ENCODE measurements at regions of chr20 and their contacts with region 1.

Region 1: GRCh38 chr20:54038961-54039360 is 31.4 kb downstream of the BCAS1 start:
- DNase-seq: no peak
- H3K4me3 Mint-ChIP-seq: no peak overlapping the region
- H3K27ac Mint-ChIP-seq: no peak overlapping the region
- H3K4me1 Mint-ChIP-seq: peaks cover 3% of the 10 kb centered on the region
- H3K27me3 Mint-ChIP-seq: peaks cover 12% of the 10 kb centered on the region

Region 2: DNA sequence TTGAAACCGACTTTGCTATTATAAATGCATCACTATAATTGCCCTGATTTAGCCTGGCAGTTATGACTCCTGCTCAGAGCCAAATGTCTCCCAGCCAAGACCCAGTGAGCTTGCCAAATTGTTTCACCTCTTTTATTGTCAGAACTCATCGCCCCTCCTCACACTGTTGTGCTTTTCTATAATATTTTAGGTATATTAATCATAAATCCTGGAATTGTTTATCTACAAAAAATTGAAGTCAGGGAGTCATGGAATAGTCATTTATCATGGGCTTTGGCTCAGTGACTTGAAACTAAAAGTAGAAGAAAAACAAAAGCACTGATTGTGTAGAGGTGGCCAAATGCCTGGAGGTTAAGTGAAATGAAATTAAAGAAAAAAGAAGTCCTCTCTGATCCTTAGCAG is 254.6 kb after region 1 on chr20:
- intact Hi-C with region 1: loop called (anchors 5 kb)
- DNase-seq: no peak
- H3K4me3 Mint-ChIP-seq: no peak overlapping the region
- H3K27ac Mint-ChIP-seq: no peak overlapping the region
- H3K4me1 Mint-ChIP-seq: peaks cover 12% of the 10 kb centered on the region
- H3K27me3 Mint-ChIP-seq: no peaks in the 10 kb centered on the region

Measured in activated T-helper 1 cell treated with anti-CD3 and anti-CD28 coated beads, Interleukin-12 subunit alpha, Interleukin-12 subunit beta, Interleukin-2, Interleukin-4 antibody, amounts not matched to agents 30 ng/mL and 10 ng/mL and 1 ng/mL, durations not matched to agents 14 hours and 24 hours and 36 hours (primary cell).